ENCODE measurements at regions of chr3 and their contacts with region 1.

Region 1: GRCh38 chr3:153043729-153044328 is 118.2 kb upstream of the RAP2B start:
- DNase-seq: no peak

Region 2: GRCh38 chr3:152961323-152961722 is 82.5 kb before region 1 on chr3:
- intact Hi-C with region 1: no loop called
- DNase-seq: peak in 5 of 42 donors; percentile 3 to 17 (median 7)

Region 3: GRCh38 chr3:153768561-153769469 is 725.0 kb after region 1 on chr3:
- intact Hi-C with region 1: loop called (anchors 10 kb)
- DNase-seq: peak in 26 of 42 donors; percentile 6 to 72 (median 38)

Measured in head of caudate nucleus (tissue), 42 donors.